ENCODE measurements at regions of chr16 and their contacts with region 1.

Region 1: DNA sequence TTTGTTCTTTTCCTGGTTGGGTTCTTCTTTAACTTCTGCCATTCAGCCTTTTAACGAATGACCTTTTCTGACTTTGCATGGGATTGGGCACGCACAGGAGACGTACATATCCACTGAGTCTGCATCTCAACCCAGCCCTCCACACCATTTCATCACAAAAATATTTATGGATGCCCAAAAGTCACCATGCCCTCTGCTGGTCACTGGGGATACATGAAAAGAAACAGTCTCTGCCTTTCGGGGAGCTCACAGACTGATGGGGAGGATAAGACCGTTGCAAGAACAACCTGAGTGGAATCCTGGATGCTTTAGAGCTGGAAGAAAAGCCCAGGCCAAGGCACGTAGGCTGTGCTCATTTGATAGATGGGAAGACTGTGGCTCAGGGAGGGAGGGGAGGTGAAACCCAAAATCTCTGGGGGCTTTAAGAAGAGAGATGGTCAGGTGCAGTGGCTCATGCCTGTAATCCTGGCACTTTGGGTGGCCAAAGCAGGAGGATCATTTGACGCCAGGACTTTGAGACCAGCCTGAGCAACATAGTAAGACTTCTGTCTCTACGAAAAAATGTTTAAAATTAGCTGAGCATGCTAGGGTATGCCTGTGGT is 7.9 kb upstream of the MT2A start:
- DNase-seq: no peak
- ATAC-seq: peak; percentile 82
- H3K4me3 ChIP-seq: no peak overlapping the region; a peak in 1 of 4 replicates
- H3K27ac ChIP-seq: no peak overlapping the region
- H3K4me1 ChIP-seq: peaks cover 8% of the 10 kb centered on the region
- H3K27me3 ChIP-seq: no peaks in the 10 kb centered on the region
- CTCF ChIP-seq: peak; percentile 79

Region 2: GRCh38 chr16:56513972-56514371 is 86.5 kb before region 1 on chr16:
- CTCF ChIA-PET with region 1: interaction called, 8 read pairs
- POLR2A ChIA-PET with region 1: no interaction called
- in situ Hi-C with region 1: no loop called
- intact Hi-C with region 1: loop called (anchors 2 kb)
- DNase-seq: peak; percentile 54
- ATAC-seq: peak; percentile 90
- H3K4me3 ChIP-seq: no peak overlapping the region
- H3K27ac ChIP-seq: no peak overlapping the region; the same call in 1 of the 2 replicates
- H3K4me1 ChIP-seq: peaks cover 28% of the 10 kb centered on the region
- H3K27me3 ChIP-seq: no peaks in the 10 kb centered on the region
- CTCF ChIP-seq: peak; percentile 78

Region 3: GRCh38 chr16:56713794-56714193 is 113.3 kb after region 1 on chr16:
- CTCF ChIA-PET with region 1: interaction called, 12 read pairs
- POLR2A ChIA-PET with region 1: no interaction called
- in situ Hi-C with region 1: no loop called
- intact Hi-C with region 1: no loop called
- DNase-seq: no peak
- ATAC-seq: no peak
- H3K4me3 ChIP-seq: no peak overlapping the region
- H3K27ac ChIP-seq: no peak overlapping the region
- H3K4me1 ChIP-seq: 0 out of 2 replicates have a peak, but pooled peaks cover 7% of the 10 kb centered on the region
- H3K27me3 ChIP-seq: no peaks in the 10 kb centered on the region
- CTCF ChIP-seq: no peak

Measured in Panc1 (cell line).